Panc1 (cell line): ENCODE measurements at regions of chr7 and their contacts with region 1.

Region 1: DNA sequence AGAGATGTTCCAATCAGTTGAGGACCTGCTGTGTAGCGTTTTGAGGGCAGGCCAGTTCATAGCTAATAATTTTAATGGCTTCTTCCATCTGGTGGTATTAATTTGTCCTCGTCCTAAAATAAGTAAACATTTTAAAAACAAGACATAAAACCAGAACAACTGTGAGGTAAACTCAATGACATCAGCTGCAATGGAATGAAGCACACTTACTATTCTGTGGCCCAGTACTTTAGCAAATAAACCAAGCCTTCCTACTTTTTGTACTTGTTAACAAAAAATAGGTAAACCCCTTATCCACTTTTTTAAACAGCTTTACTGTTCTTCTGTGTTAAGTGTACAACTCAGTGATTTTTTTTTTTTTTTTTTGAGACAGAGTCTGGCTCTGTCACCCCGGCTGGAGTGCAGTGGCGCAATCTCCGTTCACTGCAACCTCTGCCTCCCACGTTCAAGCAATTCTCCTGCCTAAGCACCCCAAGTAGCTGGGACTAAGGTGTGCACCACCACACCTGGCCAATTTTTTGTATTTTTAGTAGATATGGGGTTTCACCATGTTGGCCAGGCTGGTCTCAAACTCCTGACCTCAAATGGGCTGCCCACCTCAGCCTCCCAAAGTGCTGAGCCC is 28.9 kb upstream of the FZD1 start:
- DNase-seq: no peak
- ATAC-seq: no peak
- H3K4me3 ChIP-seq: no peak overlapping the region
- H3K27ac ChIP-seq: no peak overlapping the region
- H3K4me1 ChIP-seq: no peaks in the 10 kb centered on the region
- H3K27me3 ChIP-seq: no peaks in the 10 kb centered on the region; the same call in 1 of the 2 replicates
- CTCF ChIP-seq: no peak

Region 2: DNA sequence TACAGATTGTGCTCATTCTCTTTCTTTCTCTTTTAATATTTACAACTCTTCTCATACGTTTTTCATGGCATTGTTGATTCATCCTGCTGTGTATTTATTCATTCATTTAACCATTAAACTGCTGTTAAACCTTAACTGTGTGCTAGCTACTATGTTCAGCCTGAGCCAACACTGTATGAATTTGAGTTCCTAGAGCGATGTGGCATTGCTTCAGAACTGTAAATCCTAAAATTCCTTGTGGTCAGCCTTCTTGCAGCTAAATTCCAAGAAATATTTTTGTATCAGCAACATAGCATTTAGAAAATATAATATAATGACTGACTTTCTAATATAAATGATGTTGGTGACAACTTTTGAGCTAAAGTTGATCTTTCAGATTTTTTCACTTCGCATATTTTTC is 155.8 kb before region 1 on chr7:
- CTCF ChIA-PET with region 1: interaction called, 19 read pairs
- POLR2A ChIA-PET with region 1: no interaction called
- in situ Hi-C with region 1: no loop called
- intact Hi-C with region 1: no loop called
- DNase-seq: no peak
- ATAC-seq: no peak
- H3K4me3 ChIP-seq: no peak overlapping the region
- H3K27ac ChIP-seq: no peak overlapping the region
- H3K4me1 ChIP-seq: no peaks in the 10 kb centered on the region
- H3K27me3 ChIP-seq: no peaks in the 10 kb centered on the region
- CTCF ChIP-seq: no peak